ENCODE measurements at regions of chr2 and their contacts with region 1.

Region 1: DNA sequence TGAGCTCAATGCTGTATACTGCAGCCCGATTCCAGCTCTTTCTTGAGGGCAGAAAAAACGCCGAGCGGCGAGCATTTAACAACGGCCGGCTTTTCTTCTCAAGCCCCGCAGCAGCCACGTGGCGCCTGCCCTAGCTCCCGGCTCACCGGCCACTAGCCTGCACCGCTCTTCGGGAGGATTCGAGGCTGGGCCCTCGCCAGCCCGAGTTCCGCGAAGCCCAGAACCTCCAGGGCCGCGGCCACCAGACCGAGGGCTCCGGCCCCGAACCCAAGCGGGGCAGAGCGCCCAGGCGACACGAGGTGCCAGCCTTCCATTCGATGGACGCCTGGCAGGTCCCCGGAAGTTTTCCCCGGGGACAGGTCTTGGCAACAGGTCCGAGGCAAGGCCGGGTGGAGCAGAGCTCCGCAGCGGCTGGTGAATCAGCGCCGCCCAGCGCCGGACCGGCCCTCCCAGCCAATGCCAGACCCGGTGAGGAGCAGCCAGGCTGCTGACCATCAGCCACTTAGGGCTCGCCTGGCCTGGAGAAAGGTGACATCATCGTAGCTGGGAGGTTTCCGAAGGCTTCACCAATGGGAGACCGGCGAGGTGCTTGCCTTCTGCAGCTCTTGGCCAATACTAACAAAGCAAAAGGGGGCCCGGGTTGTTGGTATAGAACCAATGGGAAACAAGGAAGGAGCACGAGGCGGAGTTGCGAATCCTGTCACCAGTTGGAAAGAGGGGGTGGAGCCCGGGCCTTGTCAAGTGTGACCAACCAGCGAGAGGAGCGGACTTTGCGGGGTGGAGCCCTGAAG is 544 bp upstream of the MXD1 start:
- DNase-seq: peak; percentile 100
- ATAC-seq: peak; percentile 92
- H3K4me3 ChIP-seq: peak overlapping the region; percentile 56 to 69 (median 58)
- H3K27ac ChIP-seq: peak overlapping the region; percentile 89
- H3K4me1 ChIP-seq: peaks cover 37% of the 10 kb centered on the region
- H3K27me3 ChIP-seq: no peaks in the 10 kb centered on the region
- CTCF ChIP-seq: peak; percentile 96
- EP300 ChIP-seq: peak in 1 of 2 experiments; percentile 19; a peak in 2 of 4 replicates
- POLR2A ChIP-seq: peak; percentile 90 to 94
- RAD21 ChIP-seq: peak; percentile 91

Region 2: DNA sequence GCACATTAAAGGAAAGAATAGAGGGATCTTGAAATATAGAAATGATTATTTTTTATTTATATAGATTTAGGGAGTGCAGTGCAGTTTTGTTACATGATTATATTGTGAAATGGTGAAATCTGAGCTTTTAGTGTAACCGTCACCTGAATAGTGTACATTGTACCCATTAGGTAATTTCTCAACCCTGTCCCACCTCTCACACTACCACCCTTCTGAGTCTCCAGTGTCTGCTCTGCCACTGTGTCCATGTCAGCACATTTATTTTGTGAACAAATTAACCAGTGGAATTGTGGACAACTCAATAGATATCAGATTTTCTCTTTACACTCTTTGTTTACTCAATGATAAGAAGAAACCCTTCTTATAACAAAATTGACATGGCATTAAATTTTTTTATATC is 1422.8 kb before region 1 on chr2:
- CTCF ChIA-PET with region 1: no interaction called
- POLR2A ChIA-PET with region 1: no interaction called
- in situ Hi-C with region 1: no loop called
- intact Hi-C with region 1: no loop called
- DNase-seq: peak; percentile 35
- ATAC-seq: peak; percentile 66
- H3K4me3 ChIP-seq: no peak overlapping the region
- H3K27ac ChIP-seq: no peak overlapping the region
- H3K4me1 ChIP-seq: no peaks in the 10 kb centered on the region
- H3K27me3 ChIP-seq: no peaks in the 10 kb centered on the region
- CTCF ChIP-seq: no peak
- EP300 ChIP-seq: no peak
- POLR2A ChIP-seq: no peak
- RAD21 ChIP-seq: no peak

Region 3: GRCh38 chr2:69625078-69625795 is 289.1 kb before region 1 on chr2:
- CTCF ChIA-PET with region 1: no interaction called
- POLR2A ChIA-PET with region 1: no interaction called
- in situ Hi-C with region 1: no loop called
- intact Hi-C with region 1: no loop called
- DNase-seq: peak; percentile 36
- ATAC-seq: peak; percentile 69
- H3K4me3 ChIP-seq: no peak overlapping the region
- H3K27ac ChIP-seq: no peak overlapping the region
- H3K4me1 ChIP-seq: peaks cover 16% of the 10 kb centered on the region
- H3K27me3 ChIP-seq: no peaks in the 10 kb centered on the region
- CTCF ChIP-seq: no peak
- EP300 ChIP-seq: no peak
- POLR2A ChIP-seq: no peak
- RAD21 ChIP-seq: no peak

Region 4: DNA sequence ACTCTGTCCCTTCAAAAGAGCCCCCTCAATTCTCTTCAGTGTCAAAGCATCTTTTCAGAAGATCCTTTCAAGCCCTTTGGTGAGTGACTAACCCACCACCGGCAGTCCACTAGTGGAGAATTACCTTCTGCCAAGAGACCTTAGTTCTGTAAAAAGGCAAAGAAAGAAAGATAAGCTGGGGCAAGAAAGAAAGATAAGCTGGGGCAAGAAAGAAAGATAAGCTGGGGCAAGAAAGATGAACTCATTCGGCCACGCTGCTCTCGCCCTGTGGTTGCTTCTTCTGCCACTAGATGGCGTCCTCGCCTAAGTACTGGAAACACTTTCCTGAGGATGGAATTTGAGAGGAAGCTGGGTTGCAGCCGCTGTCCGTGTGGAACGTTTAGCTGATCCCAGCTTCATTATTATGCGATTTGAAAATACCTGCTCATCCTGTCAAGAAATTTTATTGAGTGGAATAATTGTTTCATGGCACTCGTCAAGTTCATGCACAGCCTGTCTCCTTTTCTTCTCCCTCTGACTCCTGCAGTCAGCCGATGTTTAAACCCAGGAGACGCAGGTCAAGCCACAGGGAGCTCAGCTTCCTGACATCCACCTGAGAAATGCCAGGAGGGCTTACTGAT is 189.7 kb before region 1 on chr2:
- CTCF ChIA-PET with region 1: no interaction called
- POLR2A ChIA-PET with region 1: interaction called, 10 read pairs
- in situ Hi-C with region 1: no loop called
- intact Hi-C with region 1: no loop called
- DNase-seq: peak; percentile 77
- ATAC-seq: peak; percentile 91
- H3K4me3 ChIP-seq: peak overlapping the region; percentile 42 to 65 (median 58)
- H3K27ac ChIP-seq: no peak overlapping the region
- H3K4me1 ChIP-seq: peaks cover 30% of the 10 kb centered on the region
- H3K27me3 ChIP-seq: no peaks in the 10 kb centered on the region
- CTCF ChIP-seq: peak; percentile 99
- EP300 ChIP-seq: no peak
- POLR2A ChIP-seq: no peak
- RAD21 ChIP-seq: peak; percentile 97

Region 5: DNA sequence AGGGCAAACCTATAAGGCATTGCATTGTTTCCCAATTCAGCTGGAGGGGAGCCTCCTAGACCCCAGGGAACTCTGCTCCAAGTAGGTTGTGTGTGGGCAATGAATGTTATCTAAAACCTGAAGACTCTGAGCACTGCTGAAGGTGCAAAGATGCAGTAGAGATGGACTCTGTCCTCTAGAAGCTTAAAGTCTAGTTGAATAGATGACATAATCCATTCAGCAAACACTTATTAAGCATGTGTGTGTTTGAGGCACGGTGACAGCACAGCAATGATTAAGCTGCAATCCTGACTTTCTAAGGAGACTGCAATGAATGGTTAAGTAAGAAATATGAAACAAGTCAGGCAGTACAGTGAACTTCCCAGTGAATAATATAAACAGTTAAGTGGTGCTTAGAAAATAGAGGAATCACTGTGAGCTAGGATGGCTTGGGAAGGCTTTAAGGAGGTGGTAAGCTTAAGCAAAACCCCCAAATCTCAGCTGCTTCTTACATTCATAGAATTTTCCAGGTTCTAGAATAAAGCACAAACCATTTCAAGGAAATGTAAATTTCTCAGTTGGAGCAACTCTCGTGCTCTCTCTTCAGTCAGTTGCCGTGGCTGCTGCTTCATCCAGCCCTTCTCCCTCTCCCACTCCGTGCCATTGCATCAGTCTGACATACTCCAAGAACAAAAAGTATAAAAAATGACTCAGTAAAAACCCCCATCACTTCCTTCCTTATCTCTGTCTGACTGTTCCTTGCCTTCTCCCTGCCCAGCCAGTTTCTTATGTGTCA is 19.7 kb after region 1 on chr2:
- CTCF ChIA-PET with region 1: no interaction called
- POLR2A ChIA-PET with region 1: interaction called, 104 read pairs
- in situ Hi-C with region 1: no loop called
- intact Hi-C with region 1: no loop called
- DNase-seq: peak; percentile 85
- ATAC-seq: peak; percentile 90
- H3K4me3 ChIP-seq: peak overlapping the region in 1 of 3 experiments; percentile 13; a peak in 1 of 6 replicates
- H3K27ac ChIP-seq: peak overlapping the region; percentile 55
- H3K4me1 ChIP-seq: peaks cover 34% of the 10 kb centered on the region
- H3K27me3 ChIP-seq: no peaks in the 10 kb centered on the region
- CTCF ChIP-seq: no peak
- EP300 ChIP-seq: peak in 1 of 2 experiments; percentile 92; a peak in 2 of 4 replicates
- POLR2A ChIP-seq: no peak
- RAD21 ChIP-seq: no peak

Region 6: DNA sequence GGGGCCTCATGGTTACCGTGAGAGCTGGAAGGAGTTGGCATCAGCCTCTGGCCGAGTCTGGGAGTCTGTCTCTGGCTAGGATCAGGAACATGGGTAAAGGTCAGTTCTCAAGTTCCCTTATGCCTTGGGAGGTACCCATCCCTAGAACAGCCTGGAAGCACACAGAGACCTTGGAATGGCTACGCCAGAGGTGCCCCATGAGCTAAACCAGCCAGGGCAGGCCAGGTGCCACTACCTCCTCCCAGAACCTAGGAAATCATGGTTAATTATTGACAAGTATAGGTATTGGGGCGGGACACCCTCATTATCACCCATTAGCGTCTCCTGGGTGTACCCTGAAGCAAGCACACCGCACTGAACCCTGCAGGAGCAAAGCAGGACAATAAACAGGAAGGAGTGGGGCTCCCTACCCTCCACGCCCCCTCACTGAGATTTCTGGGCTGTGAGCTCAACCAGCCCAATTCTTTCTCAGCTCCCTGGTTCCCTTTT is 50.0 kb after region 1 on chr2:
- CTCF ChIA-PET with region 1: no interaction called
- POLR2A ChIA-PET with region 1: interaction called, 19 read pairs
- in situ Hi-C with region 1: no loop called
- intact Hi-C with region 1: loop called (anchors 5 kb)
- DNase-seq: peak; percentile 58
- ATAC-seq: peak; percentile 57
- H3K4me3 ChIP-seq: peak overlapping the region in 2 of 3 experiments; percentile 13 to 37; a peak in 3 of 6 replicates
- H3K27ac ChIP-seq: no peak overlapping the region
- H3K4me1 ChIP-seq: peaks cover 52% of the 10 kb centered on the region
- H3K27me3 ChIP-seq: no peaks in the 10 kb centered on the region
- CTCF ChIP-seq: 0 out of 2 replicates have a peak, but pooled peaks have one; percentile 9
- EP300 ChIP-seq: no peak
- POLR2A ChIP-seq: no peak
- RAD21 ChIP-seq: no peak

Region 7: DNA sequence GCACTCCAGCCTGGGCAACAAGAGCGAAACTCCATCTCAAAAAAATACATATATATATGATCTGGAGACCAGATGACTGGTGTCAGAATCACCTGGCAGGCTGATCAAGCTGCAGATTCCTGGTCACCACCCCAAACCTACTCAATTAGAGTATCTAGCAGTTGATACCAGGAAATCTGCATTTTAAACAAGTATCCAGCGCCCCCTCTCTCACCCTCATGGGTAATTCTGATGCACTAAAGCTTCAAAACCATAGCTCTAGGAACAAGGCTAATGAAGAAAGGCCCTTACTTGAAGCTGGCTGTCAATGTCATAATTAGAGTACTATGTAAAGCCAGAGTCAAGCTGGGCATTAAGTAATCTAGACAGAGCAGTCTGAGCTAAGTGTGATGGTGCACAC is 147.9 kb after region 1 on chr2:
- CTCF ChIA-PET with region 1: interaction called, 3 read pairs
- POLR2A ChIA-PET with region 1: interaction called, 282 read pairs
- in situ Hi-C with region 1: loop called (anchors 5 kb)
- intact Hi-C with region 1: no loop called
- DNase-seq: no peak
- ATAC-seq: no peak
- H3K4me3 ChIP-seq: no peak overlapping the region
- H3K27ac ChIP-seq: no peak overlapping the region
- H3K4me1 ChIP-seq: no peaks in the 10 kb centered on the region
- H3K27me3 ChIP-seq: no peaks in the 10 kb centered on the region
- CTCF ChIP-seq: 0 out of 2 replicates have a peak, but pooled peaks have one; percentile 8
- EP300 ChIP-seq: no peak
- POLR2A ChIP-seq: no peak
- RAD21 ChIP-seq: no peak

Region 8: DNA sequence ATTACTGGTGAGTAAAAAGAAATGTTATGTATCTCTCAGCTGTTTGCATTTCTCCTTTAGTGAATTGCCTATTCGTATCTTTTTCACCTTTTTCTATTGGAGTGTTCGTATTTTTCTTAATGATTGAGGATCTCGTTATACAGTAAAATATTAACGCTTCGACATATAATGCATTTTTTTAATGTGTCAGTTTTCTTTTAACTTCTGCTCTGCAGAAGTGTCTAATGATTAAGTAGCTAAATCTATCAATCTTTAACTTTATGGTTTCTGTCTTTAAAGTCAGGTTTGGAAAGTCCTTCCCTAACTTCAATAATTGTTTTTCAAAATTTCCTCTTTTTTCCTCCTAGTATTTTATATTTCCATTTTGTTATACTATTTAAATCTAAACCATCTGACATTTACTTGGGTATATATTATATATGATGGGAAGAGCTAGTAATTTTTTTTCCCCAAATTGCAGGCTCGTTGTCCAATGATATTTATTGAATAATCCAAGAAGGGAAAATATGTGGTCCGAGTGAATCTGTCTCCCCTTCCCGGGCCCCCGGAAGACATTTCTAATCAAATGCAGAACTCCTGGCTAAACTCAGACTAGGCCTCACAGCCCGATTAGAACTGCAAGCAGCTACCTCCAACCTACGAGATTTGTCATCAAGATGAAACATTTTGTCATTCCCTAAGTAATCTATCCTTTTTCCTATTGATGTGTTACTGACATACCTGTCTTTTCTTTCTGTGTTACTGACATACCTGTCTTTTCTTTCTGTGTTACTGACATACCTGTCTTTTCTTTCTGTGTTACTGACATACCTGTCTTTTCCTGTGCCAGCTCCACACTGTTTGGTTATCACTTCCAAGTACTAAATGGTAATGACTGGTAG is 190.1 kb after region 1 on chr2:
- CTCF ChIA-PET with region 1: no interaction called
- POLR2A ChIA-PET with region 1: interaction called, 60 read pairs
- in situ Hi-C with region 1: no loop called
- intact Hi-C with region 1: no loop called
- DNase-seq: peak; percentile 69
- ATAC-seq: no peak
- H3K4me3 ChIP-seq: peak overlapping the region in 2 of 3 experiments; percentile 45 to 59; a peak in 4 of 6 replicates
- H3K27ac ChIP-seq: peak overlapping the region; percentile 55
- H3K4me1 ChIP-seq: peaks cover 54% of the 10 kb centered on the region
- H3K27me3 ChIP-seq: no peaks in the 10 kb centered on the region; a peak in 1 of 5 replicates
- CTCF ChIP-seq: no peak
- EP300 ChIP-seq: peak in 1 of 2 experiments; percentile 32; a peak in 1 of 4 replicates
- POLR2A ChIP-seq: no peak
- RAD21 ChIP-seq: no peak

Region 9: GRCh38 chr2:70248181-70248847 is 333.9 kb after region 1 on chr2 and contains the start of gene TIA1:
- CTCF ChIA-PET with region 1: no interaction called
- POLR2A ChIA-PET with region 1: interaction called, 20 read pairs
- in situ Hi-C with region 1: no loop called
- intact Hi-C with region 1: loop called (anchors 5 kb)
- DNase-seq: peak; percentile 99
- ATAC-seq: peak; percentile 93
- H3K4me3 ChIP-seq: peak within 1 kb of the TSS; percentile 96 to 98 (median 98)
- H3K27ac ChIP-seq: peak within 1 kb of the TSS; percentile 98
- H3K4me1 ChIP-seq: peaks cover 47% of the 10 kb centered on the region
- H3K27me3 ChIP-seq: no peaks in the 10 kb centered on the region; a peak in 1 of 5 replicates
- CTCF ChIP-seq: no peak
- EP300 ChIP-seq: peak in 1 of 2 experiments; percentile 54; a peak in 1 of 4 replicates
- POLR2A ChIP-seq: peak; percentile 92 to 98
- RAD21 ChIP-seq: peak; percentile 37; the same call in 1 of the 2 replicates
- total RNA-seq, gene TIA1: 199 and 209 TPM in 2 replicates